Stomach (tissue), 19 donors: ENCODE measurements at regions of chr11 and their contacts with region 1.

Region 1: GRCh38 chr11:14249121-14249963 is 109.6 kb downstream of the RRAS2 start:
- DNase-seq: peak; percentile 64 to 87
- H3K4me3 ChIP-seq: no peak overlapping the region
- H3K27ac ChIP-seq: no peak overlapping the region
- H3K4me1 ChIP-seq: peaks cover 5 to 30% (median 16%) of the 10 kb centered on the region in 4 donors
- H3K27me3 ChIP-seq: no peaks in the 10 kb centered on the region
- CTCF ChIP-seq: peak in 5 of 7 experiments; percentile 66 to 89 (median 76)
- EP300 ChIP-seq: no peak
- POLR2A ChIP-seq: no peak

Region 2: GRCh38 chr11:13772223-13773046 is 476.9 kb before region 1 on chr11:
- intact Hi-C with region 1: loop called (anchors 10 kb)
- DNase-seq: peak in 1 of 2 donors; percentile 90
- H3K4me3 ChIP-seq: no peak overlapping the region
- H3K27ac ChIP-seq: no peak overlapping the region
- H3K4me1 ChIP-seq: peaks cover 0 to 7% (median 0%) of the 10 kb centered on the region in 4 donors
- H3K27me3 ChIP-seq: no peaks in the 10 kb centered on the region
- CTCF ChIP-seq: peak in 3 of 7 experiments; percentile 27 to 49 (median 39)
- EP300 ChIP-seq: no peak
- POLR2A ChIP-seq: no peak

Region 3: DNA sequence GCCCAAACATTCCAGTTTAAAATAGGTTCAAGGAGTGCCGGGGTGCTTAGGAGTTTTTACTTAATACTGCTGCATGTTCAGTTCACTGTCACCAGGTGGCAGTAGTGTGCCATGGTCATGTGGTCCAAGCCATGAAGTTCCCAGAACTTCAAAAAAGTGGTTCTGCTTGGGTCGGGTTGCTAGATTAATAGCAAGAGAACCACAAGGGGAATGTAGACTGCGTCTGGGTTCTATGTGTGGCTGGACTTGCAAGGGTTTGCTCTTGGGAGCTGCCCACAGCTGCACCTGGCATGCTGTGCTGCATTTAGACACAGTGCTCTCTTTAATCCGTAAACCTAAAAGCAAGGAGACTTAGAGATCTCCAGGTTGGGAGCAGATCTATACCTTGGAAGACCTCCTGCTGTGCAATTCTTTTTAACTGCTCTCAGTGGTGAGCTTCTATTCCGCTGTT is 293.3 kb before region 1 on chr11:
- intact Hi-C with region 1: loop called (anchors 5 kb)
- DNase-seq: peak; percentile 66 to 90
- H3K4me3 ChIP-seq: no peak overlapping the region
- H3K27ac ChIP-seq: no peak overlapping the region
- H3K4me1 ChIP-seq: peaks cover 0 to 12% (median 3%) of the 10 kb centered on the region in 4 donors
- H3K27me3 ChIP-seq: peaks cover 0 to 30% (median 0%) of the 10 kb centered on the region in 3 donors
- CTCF ChIP-seq: peak in 5 of 7 experiments; percentile 61 to 88 (median 81)
- EP300 ChIP-seq: no peak
- POLR2A ChIP-seq: no peak

Region 4: GRCh38 chr11:14331476-14332136 is 82.3 kb after region 1 on chr11:
- intact Hi-C with region 1: no loop called
- DNase-seq: no peak
- H3K4me3 ChIP-seq: no peak overlapping the region
- H3K27ac ChIP-seq: no peak overlapping the region
- H3K4me1 ChIP-seq: peaks cover 0 to 11% (median 3%) of the 10 kb centered on the region in 4 donors
- H3K27me3 ChIP-seq: no peaks in the 10 kb centered on the region
- CTCF ChIP-seq: no peak
- EP300 ChIP-seq: no peak
- POLR2A ChIP-seq: no peak